Activated CD4-positive, alpha-beta memory T cell treated with anti-CD3 and anti-CD28 coated beads, Interleukin-2, amount 10 ng/mL, durations not matched to agents 7 days and 5 days (primary cell): ENCODE measurements at regions of chr19 and their contacts with region 1.

Region 1: GRCh38 chr19:17803264-17803922 is 8.5 kb downstream of the B3GNT3 start:
- DNase-seq: peak; percentile 78
- H3K4me3 Mint-ChIP-seq: peak overlapping the region; percentile 49
- H3K27ac Mint-ChIP-seq: peak overlapping the region; percentile 97
- H3K4me1 Mint-ChIP-seq: peaks cover 49% of the 10 kb centered on the region
- H3K27me3 Mint-ChIP-seq: peaks cover 8% of the 10 kb centered on the region

Region 2: GRCh38 chr19:17687857-17688784 is 115.3 kb before region 1 on chr19 and contains the start of gene UNC13A:
- CTCF ChIA-PET with region 1: no interaction called
- POLR2A ChIA-PET with region 1: no interaction called
- DNase-seq: peak; percentile 48
- H3K4me3 Mint-ChIP-seq: no peak within 1 kb of the TSS
- H3K27ac Mint-ChIP-seq: no peak within 1 kb of the TSS
- H3K4me1 Mint-ChIP-seq: peaks cover 7% of the 10 kb centered on the region
- H3K27me3 Mint-ChIP-seq: peaks cover 66% of the 10 kb centered on the region
- total RNA-seq, gene UNC13A: 0.03 TPM in 1 of 2 experiments, not detected in the other

Region 3: DNA sequence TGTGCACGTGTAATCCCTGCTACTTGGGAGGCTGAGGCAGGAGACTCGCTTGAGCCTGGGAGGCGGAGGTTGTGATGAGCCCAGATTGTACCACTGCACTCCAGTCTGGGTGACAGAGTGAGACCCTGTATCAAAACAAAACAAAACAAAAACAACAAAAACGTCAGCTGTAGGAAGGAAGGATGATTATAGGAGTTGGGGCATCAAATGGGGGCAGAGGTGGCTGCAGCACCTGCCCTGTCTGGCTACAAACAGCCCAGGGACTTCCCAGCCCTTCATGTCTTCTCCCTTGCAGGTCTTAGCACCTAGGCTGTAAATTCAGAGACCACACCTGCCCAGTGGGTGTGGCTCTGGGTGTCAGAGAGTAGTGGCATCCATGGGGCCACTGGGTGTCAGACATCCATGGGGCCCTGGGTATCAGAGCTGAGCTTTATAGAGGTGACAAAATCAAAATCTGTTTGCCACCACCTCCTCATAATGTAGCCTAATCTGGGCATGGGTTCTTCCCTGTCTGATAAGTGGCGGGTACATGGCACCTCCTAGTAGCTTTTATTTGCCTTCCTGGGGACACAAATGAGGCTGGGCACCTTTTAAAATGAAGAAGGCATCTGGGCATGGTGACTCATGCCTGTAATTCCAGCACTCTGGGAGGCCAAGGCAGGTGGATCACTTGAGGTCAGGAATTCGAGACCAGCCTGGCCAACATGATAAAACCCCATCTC is 13.2 kb before region 1 on chr19:
- CTCF ChIA-PET with region 1: interaction called, 11 read pairs
- POLR2A ChIA-PET with region 1: interaction called, 15 read pairs
- DNase-seq: no peak
- H3K4me3 Mint-ChIP-seq: no peak overlapping the region
- H3K27ac Mint-ChIP-seq: peak overlapping the region; percentile 44
- H3K4me1 Mint-ChIP-seq: peaks cover 42% of the 10 kb centered on the region
- H3K27me3 Mint-ChIP-seq: peaks cover 13% of the 10 kb centered on the region